Activated naive CD4-positive, alpha-beta T cell treated with anti-CD3 and anti-CD28 coated beads for 36 hours (primary cell): ENCODE measurements at regions of chr6 and their contacts with region 1.

Region 1: DNA sequence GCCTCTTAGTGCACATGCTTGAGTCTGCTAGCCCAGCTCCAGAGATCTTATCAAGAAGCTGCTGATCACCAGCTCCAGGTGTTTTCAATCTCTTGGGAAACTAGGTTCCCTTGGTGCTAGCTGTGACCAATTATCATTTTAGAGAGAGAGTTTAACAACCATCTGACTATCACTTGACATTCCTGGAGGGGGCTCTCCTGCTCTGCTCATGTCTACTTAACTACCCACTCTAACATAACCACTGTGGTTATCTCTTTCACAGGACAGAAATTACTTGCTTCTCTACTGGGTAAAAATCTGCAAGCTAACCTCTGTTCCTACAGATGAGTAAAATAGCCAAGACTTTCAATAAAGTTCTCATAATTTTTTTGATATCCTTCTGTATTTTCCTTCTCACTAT is 823.4 kb upstream of the GJE1 start:
- DNase-seq: peak; percentile 7
- H3K4me3 Mint-ChIP-seq: no peak overlapping the region
- H3K27ac Mint-ChIP-seq: no peak overlapping the region
- H3K4me1 Mint-ChIP-seq: peaks cover 11% of the 10 kb centered on the region
- H3K27me3 Mint-ChIP-seq: no peaks in the 10 kb centered on the region

Region 2: DNA sequence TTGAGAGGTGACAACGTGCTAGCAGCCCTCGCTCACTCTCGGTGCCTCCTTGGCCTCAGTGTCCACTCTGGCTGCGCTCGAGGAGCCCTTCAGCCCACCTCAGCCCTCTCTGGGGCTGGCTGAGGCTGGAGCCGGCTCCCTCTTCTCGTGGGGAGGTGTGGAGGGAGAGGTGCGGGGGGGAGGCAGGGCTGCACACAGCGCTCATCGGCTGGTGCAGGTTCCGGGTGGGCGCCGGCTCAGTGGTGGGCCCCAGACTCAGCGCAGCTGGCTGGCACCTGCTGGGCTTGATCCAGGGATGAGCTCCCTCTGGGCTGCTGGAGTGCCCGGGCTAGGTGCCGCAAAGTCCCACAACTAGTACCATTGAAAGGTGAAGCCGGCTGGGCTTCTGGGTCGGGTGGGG is 134.4 kb before region 1 on chr6:
- CTCF ChIA-PET with region 1: no interaction called
- intact Hi-C with region 1: no loop called
- DNase-seq: no peak
- H3K4me3 Mint-ChIP-seq: no peak overlapping the region
- H3K27ac Mint-ChIP-seq: no peak overlapping the region
- H3K4me1 Mint-ChIP-seq: no peaks in the 10 kb centered on the region
- H3K27me3 Mint-ChIP-seq: no peaks in the 10 kb centered on the region

Region 3: GRCh38 chr6:141326426-141326825 is 17.1 kb after region 1 on chr6:
- CTCF ChIA-PET with region 1: no interaction called
- intact Hi-C with region 1: loop called (anchors 1 kb)
- DNase-seq: peak; percentile 80
- H3K4me3 Mint-ChIP-seq: no peak overlapping the region
- H3K27ac Mint-ChIP-seq: no peak overlapping the region
- H3K4me1 Mint-ChIP-seq: peaks cover 15% of the 10 kb centered on the region
- H3K27me3 Mint-ChIP-seq: no peaks in the 10 kb centered on the region

Region 4: DNA sequence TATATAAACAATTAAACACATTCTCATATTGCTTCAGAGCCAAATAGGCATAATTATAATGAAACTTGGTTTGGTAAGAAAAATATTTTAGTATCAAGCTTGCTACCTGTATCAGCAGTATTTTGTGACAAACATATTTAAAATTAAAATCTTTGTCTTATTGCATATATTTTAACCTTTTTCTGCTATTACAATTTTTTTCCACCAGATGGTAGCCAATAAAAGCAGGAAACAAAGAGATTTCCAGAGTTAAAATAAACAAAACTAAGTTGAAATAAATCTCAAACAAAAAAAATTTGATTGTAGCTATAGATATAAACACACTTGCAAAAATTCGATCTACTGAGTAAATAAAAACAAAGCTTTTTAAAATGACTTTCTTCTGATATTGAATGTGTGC is 332.1 kb after region 1 on chr6:
- CTCF ChIA-PET with region 1: no interaction called
- intact Hi-C with region 1: no loop called
- DNase-seq: no peak
- H3K4me3 Mint-ChIP-seq: no peak overlapping the region
- H3K27ac Mint-ChIP-seq: no peak overlapping the region
- H3K4me1 Mint-ChIP-seq: no peaks in the 10 kb centered on the region
- H3K27me3 Mint-ChIP-seq: no peaks in the 10 kb centered on the region